MCF 10A (cell line): ENCODE measurements at regions of chr11 and their contacts with region 1.

Region 1: DNA sequence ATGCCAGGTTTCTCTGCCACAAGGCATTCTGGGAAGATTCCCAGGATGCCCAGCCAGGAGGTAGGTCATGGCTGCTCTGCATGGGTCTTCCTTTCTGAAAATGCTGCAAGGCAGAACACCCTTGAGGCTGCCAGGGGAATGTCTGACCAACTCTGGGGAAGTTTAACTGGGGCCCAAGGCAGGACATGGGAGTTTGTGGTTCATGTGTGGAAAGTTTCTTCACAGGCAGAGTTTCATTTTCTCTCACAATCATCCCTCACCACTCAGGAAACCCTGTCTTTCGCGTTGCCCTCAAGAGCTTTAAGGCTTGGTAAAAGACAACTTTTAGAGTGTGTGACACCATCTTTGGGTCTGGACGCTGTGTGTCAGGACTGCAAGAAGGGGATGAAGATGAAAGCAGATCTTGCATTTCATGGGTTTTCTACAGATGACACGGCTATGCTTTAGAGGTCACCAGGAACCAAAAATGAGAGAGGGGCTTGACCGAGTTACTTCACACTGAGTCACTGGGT is 133.5 kb downstream of the CD44 start:
- DNase-seq: no peak
- H3K4me3 Mint-ChIP-seq: no peak overlapping the region
- H3K27ac Mint-ChIP-seq: no peak overlapping the region
- H3K4me1 Mint-ChIP-seq: peaks cover 29% of the 10 kb centered on the region
- H3K27me3 Mint-ChIP-seq: no peaks in the 10 kb centered on the region
- CTCF ChIP-seq: no peak

Region 2: DNA sequence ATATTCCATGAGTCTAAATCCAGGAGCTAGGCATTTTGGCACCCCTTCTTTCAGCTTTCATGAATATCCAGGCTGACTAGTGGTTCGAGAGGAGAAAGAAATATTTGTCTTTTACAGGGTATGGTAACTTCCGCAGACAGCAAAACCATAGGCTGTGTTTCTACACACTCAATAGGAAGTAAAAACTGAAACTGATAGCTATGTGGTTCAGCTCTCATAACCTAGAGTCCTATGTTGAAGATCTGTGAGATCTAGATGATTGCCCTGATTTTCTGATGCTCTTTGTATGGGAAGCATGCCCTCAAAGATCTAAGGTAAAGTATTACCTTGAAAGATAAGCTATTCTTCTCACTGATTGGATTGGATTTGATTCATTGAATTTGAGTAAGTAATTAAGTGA is 15.2 kb before region 1 on chr11:
- CTCF ChIA-PET with region 1: interaction called, 7 read pairs
- POLR2A ChIA-PET with region 1: interaction called, 10 read pairs
- intact Hi-C with region 1: no loop called
- DNase-seq: no peak
- H3K4me3 Mint-ChIP-seq: no peak overlapping the region
- H3K27ac Mint-ChIP-seq: no peak overlapping the region
- H3K4me1 Mint-ChIP-seq: no peaks in the 10 kb centered on the region
- H3K27me3 Mint-ChIP-seq: no peaks in the 10 kb centered on the region
- CTCF ChIP-seq: no peak

Region 3: DNA sequence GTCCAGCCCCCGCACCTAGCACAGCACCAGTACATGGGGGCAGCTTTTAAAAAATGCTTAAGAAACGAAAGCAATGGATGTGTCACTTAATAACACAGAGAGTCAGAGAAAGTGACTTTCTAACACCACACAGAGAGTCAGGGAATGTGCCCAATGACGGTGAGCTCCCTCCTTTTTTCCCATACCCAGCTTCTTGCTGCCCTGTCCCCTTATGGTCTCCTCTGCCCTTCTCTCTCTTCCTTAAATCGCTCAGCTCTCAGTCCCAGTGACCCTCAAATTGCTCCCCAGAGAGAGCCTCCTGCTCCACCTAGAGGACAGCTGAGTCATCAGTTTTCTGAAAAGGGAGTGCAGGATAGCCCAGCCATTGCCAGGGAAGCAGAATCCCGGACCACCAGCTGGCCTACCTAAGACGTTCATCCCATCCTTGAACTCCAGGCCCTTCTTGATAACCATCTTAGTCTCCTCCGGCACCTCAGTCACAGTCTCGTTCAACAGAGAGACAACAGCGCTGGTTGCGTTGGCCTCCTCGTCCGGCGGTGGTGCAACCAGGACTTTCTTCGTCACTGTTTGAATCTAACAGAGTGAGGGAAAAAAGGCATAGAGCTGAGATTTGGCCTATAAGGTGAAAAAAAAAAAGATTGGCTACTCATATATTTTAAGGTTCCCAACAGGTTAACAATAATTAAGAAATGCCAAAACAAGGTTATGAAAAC is 33.4 kb after region 1 on chr11:
- CTCF ChIA-PET with region 1: interaction called, 4 read pairs
- POLR2A ChIA-PET with region 1: interaction called, 10 read pairs
- intact Hi-C with region 1: no loop called
- DNase-seq: peak; percentile 61
- H3K4me3 Mint-ChIP-seq: no peak overlapping the region
- H3K27ac Mint-ChIP-seq: no peak overlapping the region
- H3K4me1 Mint-ChIP-seq: peaks cover 38% of the 10 kb centered on the region
- H3K27me3 Mint-ChIP-seq: no peaks in the 10 kb centered on the region
- CTCF ChIP-seq: peak; percentile 18